Breast epithelium (tissue), 4 donors: ENCODE measurements at regions of chr18 and their contacts with region 1.

Region 1: DNA sequence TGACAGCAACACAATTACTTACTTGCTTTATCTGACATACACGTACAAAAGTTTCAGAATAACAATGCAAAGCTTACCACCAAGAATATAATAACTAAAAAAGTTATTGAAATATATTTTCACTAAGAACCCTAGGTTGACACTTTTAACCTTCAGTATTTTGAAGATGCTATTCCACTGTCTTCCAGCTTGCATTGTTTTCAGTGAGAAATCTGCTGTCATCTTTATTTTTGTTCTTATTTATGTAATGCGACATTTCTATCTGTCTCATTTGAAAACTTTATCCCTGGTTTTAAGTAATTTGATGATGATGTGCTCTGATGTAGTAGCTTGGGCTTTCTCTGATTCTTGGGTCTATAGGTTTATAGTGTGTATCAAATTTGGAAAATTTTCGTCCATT is 165.0 kb upstream of the SMIM21 start:
- DNase-seq: no peak
- H3K4me3 ChIP-seq: no peak overlapping the region
- H3K27ac ChIP-seq: no peak overlapping the region
- H3K4me1 ChIP-seq: no peaks in the 10 kb centered on the region
- H3K27me3 ChIP-seq: no peaks in the 10 kb centered on the region
- CTCF ChIP-seq: no peak
- POLR2A ChIP-seq: no peak

Region 2: DNA sequence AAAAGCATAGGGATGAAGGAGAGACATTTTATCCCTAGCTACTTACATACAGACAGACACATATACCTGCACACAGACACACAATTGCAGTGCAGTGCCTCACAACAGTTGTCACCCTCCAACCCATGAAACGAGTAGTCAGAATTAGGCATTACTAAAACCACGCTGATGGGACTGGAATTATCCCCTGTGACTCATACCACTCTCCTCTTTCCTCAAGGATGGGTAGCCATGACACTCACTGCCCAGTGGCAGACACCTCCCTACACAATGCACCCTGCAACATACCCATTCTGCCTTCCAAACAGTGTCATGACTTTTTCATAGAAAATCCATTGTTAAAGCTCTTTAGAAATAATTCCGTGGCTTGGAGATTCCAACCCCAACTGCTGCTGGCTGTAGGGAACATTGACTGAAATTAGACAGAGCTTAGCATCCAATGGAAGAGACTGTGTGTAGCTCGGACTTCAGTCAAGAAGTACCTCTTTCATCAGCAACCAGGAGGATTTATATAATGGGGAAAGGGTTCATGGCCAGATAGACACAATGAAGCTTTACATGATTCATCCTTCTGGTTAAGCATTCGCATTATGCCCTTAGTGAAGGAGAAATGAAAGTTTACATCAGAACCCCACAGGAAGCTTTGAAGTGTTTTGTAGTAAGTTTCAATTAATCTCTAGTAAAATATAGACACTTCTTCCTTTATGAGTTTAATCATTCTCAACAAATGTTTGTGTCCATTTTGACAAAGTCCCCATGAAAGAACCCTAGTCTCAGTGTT is 1600.1 kb before region 1 on chr18:
- intact Hi-C with region 1: no loop called
- DNase-seq: no peak
- H3K4me3 ChIP-seq: no peak overlapping the region
- H3K27ac ChIP-seq: no peak overlapping the region
- H3K4me1 ChIP-seq: no peaks in the 10 kb centered on the region
- H3K27me3 ChIP-seq: no peaks in the 10 kb centered on the region
- CTCF ChIP-seq: no peak
- POLR2A ChIP-seq: no peak

Region 3: GRCh38 chr18:75111722-75112121 is 480.8 kb before region 1 on chr18:
- intact Hi-C with region 1: no loop called
- DNase-seq: no peak
- H3K4me3 ChIP-seq: no peak overlapping the region
- H3K27ac ChIP-seq: no peak overlapping the region
- H3K4me1 ChIP-seq: no peaks in the 10 kb centered on the region
- H3K27me3 ChIP-seq: peaks cover 0 to 4% of the 10 kb centered on the region in 2 donors
- CTCF ChIP-seq: no peak
- POLR2A ChIP-seq: no peak

Region 4: DNA sequence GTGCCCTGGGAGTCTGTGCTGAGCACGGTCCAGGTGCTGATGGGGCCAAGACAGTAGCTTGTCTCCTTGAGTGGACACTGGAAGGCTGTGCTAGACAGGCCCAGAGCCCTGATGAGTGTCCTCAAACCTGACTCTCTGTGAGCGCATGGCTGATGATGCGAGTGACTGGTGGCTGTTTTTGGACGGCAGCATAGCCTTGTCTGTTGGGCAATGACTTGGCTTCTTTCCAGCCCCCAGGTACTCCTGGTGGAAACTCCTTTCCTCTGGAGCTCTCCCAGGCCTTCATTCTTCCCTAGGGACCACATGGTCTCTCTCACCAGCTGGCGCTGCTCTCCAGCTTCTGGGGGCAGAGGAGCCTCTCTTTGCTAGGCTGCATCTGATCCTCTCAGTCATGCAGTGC is 42.6 kb after region 1 on chr18:
- intact Hi-C with region 1: loop called (anchors 2 kb)
- DNase-seq: peak in 1 of 2 donors; percentile 32
- H3K4me3 ChIP-seq: no peak overlapping the region
- H3K27ac ChIP-seq: no peak overlapping the region
- H3K4me1 ChIP-seq: no peaks in the 10 kb centered on the region
- H3K27me3 ChIP-seq: no peaks in the 10 kb centered on the region
- CTCF ChIP-seq: no peak
- POLR2A ChIP-seq: no peak

Region 5: DNA sequence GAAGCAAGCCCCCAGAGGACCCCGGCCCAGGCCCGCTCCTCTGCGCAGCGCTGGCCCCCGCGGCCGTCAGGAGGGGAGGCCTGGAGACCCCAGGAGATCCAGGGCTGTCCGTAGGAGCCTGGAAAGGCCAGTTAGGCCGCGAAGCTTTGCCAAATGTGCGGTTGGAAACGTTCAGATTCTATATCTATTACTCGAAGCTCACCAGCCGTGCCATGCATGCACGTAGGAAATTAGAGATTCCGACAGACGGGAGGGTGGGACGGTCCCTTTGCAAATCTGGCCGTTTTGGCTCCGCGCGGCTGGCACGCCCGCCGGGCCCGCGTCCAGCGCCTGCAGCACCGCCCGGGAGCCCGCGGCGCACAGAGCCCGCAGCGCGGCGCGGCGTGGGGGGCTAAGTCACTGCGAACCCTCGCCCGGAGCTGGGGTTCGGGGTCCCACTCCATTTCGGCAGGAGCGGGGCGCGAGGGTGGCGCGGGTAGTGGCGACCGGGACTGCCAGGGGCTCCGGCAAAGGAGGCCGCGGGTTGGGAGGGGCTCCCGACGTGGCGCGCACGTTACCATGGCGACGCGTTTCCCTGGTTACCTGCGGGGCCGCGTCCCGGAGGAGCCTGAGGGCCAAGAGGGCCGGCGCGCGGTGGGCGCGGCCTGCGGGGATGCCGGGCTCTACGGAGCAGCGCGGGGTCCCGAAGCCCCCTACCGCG is 323.6 kb after region 1 on chr18:
- intact Hi-C with region 1: no loop called
- DNase-seq: no peak
- H3K4me3 ChIP-seq: peak overlapping the region; percentile 36 to 74 (median 50)
- H3K27ac ChIP-seq: no peak overlapping the region
- H3K4me1 ChIP-seq: no peaks in the 10 kb centered on the region
- H3K27me3 ChIP-seq: no peaks in the 10 kb centered on the region
- CTCF ChIP-seq: no peak
- POLR2A ChIP-seq: no peak

Region 6: GRCh38 chr18:77049938-77050337 is 1457.4 kb after region 1 on chr18:
- intact Hi-C with region 1: no loop called
- DNase-seq: no peak
- H3K4me3 ChIP-seq: no peak overlapping the region
- H3K27ac ChIP-seq: no peak overlapping the region
- H3K4me1 ChIP-seq: no peaks in the 10 kb centered on the region
- H3K27me3 ChIP-seq: no peaks in the 10 kb centered on the region
- CTCF ChIP-seq: no peak
- POLR2A ChIP-seq: no peak